Activated naive CD8-positive, alpha-beta T cell treated with anti-CD3 and anti-CD28 coated beads, Interleukin-2, amount 10 ng/mL, durations not matched to agents 7 days and 5 days (primary cell): ENCODE measurements at regions of chr7 and their contacts with region 1.

Region 1: DNA sequence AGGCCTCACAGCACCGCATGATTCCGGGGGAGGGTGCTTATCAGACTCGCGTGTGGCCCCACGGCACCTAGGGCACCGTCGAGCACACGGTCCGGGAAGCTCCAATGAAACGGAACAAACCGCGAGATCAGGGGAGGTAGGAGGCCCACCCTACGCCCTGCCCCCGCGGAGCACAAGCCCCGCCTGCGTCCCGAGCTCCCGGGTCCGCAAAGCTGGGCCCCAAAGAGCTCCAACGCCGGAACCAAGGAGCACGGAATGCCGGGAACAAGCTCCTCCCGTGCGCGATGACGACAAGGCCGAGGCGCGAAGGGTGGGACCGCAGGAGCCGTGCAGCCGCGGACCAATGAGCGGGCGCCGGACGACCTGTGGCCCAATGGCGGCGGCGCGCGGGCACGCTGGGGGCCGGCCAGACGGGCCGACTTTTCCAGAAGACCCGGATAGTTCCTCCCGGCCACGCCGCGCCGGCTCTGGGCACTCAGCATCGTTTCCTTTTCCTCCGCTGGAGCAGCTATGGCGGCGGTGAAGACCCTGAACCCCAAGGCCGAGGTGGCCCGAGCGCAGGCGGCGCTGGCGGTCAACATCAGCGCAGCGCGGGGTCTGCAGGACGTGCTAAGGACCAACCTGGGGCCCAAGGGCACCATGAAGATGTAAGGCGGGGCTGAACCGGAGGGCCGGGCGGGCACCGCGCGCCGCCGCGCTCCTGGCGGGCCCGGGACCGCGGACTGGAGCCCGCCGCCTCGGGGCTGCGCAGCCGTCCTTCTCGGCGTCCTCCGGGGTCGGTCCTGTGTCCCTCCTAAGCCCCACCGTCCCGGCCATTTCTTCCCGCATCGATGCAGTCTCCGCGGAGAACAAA is at the starts of genes CCT6A and PSPH:
- DNase-seq: peak; percentile 92
- ATAC-seq: peak; percentile 93
- H3K4me3 Mint-ChIP-seq: peak within 1 kb of the TSS; percentile 100
- H3K27ac Mint-ChIP-seq: peak within 1 kb of the TSS; percentile 95
- H3K4me1 Mint-ChIP-seq: peaks cover 33% of the 10 kb centered on the region
- H3K27me3 Mint-ChIP-seq: no peaks in the 10 kb centered on the region
- total RNA-seq, gene CCT6A: 94.9 to 102 TPM
- total RNA-seq, gene PSPH: 7.9 to 10.1 TPM

Region 2: GRCh38 chr7:56019501-56019900 is 32.1 kb before region 1 on chr7:
- POLR2A ChIA-PET with region 1: no interaction called
- DNase-seq: no peak
- ATAC-seq: no peak
- H3K4me3 Mint-ChIP-seq: no peak overlapping the region
- H3K27ac Mint-ChIP-seq: no peak overlapping the region
- H3K4me1 Mint-ChIP-seq: no peaks in the 10 kb centered on the region
- H3K27me3 Mint-ChIP-seq: no peaks in the 10 kb centered on the region

Region 3: DNA sequence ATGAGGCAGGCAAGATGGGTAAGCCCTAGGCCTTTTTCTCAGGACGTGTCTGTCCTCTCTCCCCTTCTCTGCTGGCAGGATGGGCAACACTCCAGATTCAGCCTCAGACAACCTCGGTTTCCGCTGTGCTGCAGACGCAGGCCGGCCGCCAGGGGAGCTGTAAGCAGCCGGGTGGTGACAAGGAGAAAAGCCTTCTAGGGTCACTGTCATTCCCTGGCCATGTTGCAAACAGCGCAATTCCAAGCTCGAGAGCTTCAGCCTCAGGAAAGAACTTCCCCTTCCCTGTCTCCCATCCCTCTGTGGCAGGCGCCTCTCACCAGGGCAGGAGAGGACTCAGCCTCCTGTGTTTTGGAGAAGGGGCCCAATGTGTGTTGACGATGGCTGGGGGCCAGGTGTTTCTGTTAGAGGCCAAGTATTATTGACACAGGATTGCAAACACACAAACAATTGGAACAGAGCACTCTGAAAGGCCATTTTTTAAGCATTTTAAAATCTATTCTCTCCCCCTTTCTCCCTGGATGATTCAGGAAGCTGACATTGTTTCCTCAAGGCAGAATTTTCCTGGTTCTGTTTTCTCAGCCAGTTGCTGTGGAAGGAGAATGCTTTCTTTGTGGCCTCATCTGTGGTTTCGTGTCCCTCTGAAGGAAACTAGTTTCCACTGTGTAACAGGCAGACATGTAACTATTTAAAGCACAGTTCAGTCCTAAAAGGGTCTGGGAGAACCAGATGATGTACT is 28.1 kb after region 1 on chr7:
- POLR2A ChIA-PET with region 1: no interaction called
- DNase-seq: peak; percentile 8
- ATAC-seq: no peak
- H3K4me3 Mint-ChIP-seq: no peak overlapping the region
- H3K27ac Mint-ChIP-seq: no peak overlapping the region
- H3K4me1 Mint-ChIP-seq: no peaks in the 10 kb centered on the region
- H3K27me3 Mint-ChIP-seq: no peaks in the 10 kb centered on the region

Region 4: GRCh38 chr7:56106108-56107073 is 54.8 kb after region 1 on chr7 and contains the start of gene CHCHD2:
- POLR2A ChIA-PET with region 1: interaction called, 13 read pairs
- DNase-seq: peak; percentile 85
- ATAC-seq: peak; percentile 98
- H3K4me3 Mint-ChIP-seq: peak within 1 kb of the TSS; percentile 99
- H3K27ac Mint-ChIP-seq: peak within 1 kb of the TSS; percentile 98
- H3K4me1 Mint-ChIP-seq: peaks cover 24% of the 10 kb centered on the region
- H3K27me3 Mint-ChIP-seq: no peaks in the 10 kb centered on the region
- total RNA-seq, gene CHCHD2: 354 to 370 TPM